Activated T-helper 1 cell treated with anti-CD3 and anti-CD28 coated beads, Interleukin-12 subunit alpha, Interleukin-12 subunit beta, Interleukin-2, Interleukin-4 antibody, amounts not matched to agents 30 ng/mL and 10 ng/mL and 1 ng/mL, durations not matched to agents 14 hours and 24 hours and 36 hours (primary cell): ENCODE measurements at regions of chr7 and their contacts with region 1.

Region 1: GRCh38 chr7:138903186-138903820 is 77.9 kb downstream of the KIAA1549 start:
- DNase-seq: peak; percentile 78
- H3K4me3 Mint-ChIP-seq: peak overlapping the region; percentile 74
- H3K27ac Mint-ChIP-seq: peak overlapping the region; percentile 84
- H3K4me1 Mint-ChIP-seq: peaks cover 49% of the 10 kb centered on the region
- H3K27me3 Mint-ChIP-seq: peaks cover 48% of the 10 kb centered on the region

Region 2: DNA sequence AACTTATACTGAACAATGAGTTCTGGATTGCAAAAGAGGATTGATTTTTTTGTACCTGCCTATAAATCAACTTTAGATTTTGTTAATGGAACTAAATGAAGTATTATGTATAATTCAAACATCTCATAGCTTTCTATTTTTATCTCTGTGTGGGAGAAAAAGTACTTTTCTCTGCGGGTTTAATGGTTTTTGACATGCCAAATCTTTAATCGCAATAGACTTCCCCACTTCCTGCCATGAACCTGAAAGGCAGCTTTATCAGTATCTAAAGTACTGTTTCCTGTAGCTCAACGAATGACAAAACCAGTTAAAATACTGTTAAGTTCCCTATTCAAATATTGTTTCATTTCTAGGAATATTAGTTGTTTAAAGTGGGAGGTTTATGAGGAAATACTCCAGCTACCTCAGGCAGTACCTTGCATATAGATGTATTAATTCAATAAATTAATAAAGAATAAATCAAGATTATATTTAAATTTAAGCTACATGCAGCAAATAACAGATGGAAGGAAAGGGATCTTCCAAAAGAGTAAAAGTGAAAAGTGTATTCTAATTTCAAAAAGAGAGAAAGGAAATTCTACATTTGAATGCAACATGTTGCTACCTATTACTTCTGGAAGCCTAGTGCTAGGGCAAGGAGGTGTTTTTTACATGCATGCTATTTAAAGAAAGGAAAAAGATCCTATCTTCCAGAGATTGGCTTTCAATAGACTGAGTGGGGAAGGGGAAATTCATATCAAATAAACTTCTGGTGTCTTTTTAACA is 278.0 kb before region 1 on chr7:
- intact Hi-C with region 1: no loop called
- DNase-seq: no peak
- H3K4me3 Mint-ChIP-seq: no peak overlapping the region
- H3K27ac Mint-ChIP-seq: no peak overlapping the region
- H3K4me1 Mint-ChIP-seq: peaks cover 32% of the 10 kb centered on the region
- H3K27me3 Mint-ChIP-seq: peaks cover 7% of the 10 kb centered on the region

Region 3: GRCh38 chr7:138913783-138914182 is 10.5 kb after region 1 on chr7:
- intact Hi-C with region 1: no loop called
- DNase-seq: no peak
- H3K4me3 Mint-ChIP-seq: no peak overlapping the region
- H3K27ac Mint-ChIP-seq: no peak overlapping the region
- H3K4me1 Mint-ChIP-seq: no peaks in the 10 kb centered on the region
- H3K27me3 Mint-ChIP-seq: peaks cover 34% of the 10 kb centered on the region

Region 4: GRCh38 chr7:138926241-138926612 is 22.9 kb after region 1 on chr7:
- intact Hi-C with region 1: loop called (anchors 1 kb)
- DNase-seq: no peak
- H3K4me3 Mint-ChIP-seq: no peak overlapping the region
- H3K27ac Mint-ChIP-seq: no peak overlapping the region
- H3K4me1 Mint-ChIP-seq: peaks cover 15% of the 10 kb centered on the region
- H3K27me3 Mint-ChIP-seq: peaks cover 4% of the 10 kb centered on the region